OCI-LY7 (cell line): ENCODE measurements at regions of chr2 and their contacts with region 1.

Region 1: GRCh38 chr2:135985018-135985825 is at the start of gene DARS1:
- DNase-seq: peak; percentile 93
- H3K4me3 ChIP-seq: peak within 1 kb of the TSS; percentile 85
- H3K27ac ChIP-seq: peak within 1 kb of the TSS; percentile 79
- H3K4me1 ChIP-seq: peaks cover 49% of the 10 kb centered on the region
- CTCF ChIP-seq: no peak
- total RNA-seq, gene DARS1: 90.5 and 108 TPM in 2 replicates

Region 2: DNA sequence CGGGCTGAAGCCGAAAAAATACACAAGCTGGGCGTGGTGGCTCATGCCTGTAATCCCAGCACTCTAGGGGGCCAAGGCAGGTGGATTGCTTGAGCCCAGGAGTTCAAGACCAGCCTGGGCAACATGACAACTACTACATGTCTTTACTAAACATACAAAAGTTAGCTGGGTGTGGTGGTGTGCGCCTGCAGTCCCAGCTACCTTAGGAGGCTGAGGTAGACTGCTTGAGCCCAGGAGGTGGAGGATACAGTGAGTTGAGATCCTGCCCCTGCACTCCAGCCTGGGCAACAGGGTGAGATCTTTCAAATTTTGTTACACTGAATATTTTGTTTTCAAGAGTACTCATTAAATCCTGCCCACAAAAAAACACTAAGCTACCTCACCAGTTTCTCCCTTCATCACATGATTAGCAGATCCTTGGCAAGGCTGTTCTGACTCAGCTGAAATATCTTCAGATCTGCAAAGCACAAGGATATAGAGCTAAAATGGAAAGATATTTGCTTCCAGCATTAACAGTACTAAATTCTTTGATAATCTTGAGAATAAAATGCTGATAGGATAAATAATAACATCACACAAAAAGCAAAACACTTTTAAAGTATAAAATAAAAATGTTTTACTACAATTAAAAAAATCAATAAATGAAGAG is 80.8 kb before region 1 on chr2:
- CTCF ChIA-PET with region 1: no interaction called
- POLR2A ChIA-PET with region 1: no interaction called
- intact Hi-C with region 1: no loop called
- DNase-seq: no peak
- H3K4me3 ChIP-seq: no peak overlapping the region
- H3K27ac ChIP-seq: no peak overlapping the region
- H3K4me1 ChIP-seq: no peaks in the 10 kb centered on the region
- CTCF ChIP-seq: no peak

Region 3: DNA sequence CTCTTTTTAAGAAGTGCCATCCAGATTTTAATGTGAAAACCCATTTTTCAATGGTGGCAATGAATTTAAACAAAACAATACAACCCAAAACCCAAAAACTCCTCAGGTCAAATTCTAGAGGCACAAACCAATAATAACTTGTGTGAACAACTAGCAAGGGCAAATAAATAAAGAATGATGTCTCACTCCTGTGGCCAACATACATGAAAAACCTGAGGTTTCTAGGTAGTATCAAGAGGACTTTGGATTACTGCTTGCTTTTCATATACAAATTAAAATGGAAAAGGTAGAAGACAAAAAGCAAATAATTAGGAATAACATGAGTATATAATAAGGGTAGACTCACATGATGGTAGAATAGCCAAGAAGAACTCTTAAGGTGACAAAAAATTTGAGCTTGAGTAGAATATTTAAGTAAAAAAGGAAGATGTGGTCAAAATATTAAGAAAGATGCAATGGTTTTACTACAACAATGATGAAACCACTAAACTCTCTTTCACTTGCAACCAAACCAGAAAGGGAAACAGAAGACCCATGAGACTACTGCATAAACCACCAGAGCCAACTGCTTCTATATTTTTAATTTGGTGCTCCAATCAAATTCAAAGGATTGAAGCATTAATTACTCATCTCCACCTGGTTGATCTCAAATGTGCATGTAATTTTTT is 53.3 kb before region 1 on chr2:
- CTCF ChIA-PET with region 1: no interaction called
- POLR2A ChIA-PET with region 1: interaction called, 11 read pairs
- intact Hi-C with region 1: no loop called
- DNase-seq: no peak
- H3K4me3 ChIP-seq: no peak overlapping the region
- H3K27ac ChIP-seq: no peak overlapping the region
- H3K4me1 ChIP-seq: peaks cover 8% of the 10 kb centered on the region
- CTCF ChIP-seq: no peak

Region 4: GRCh38 chr2:136259551-136259950 is 274.3 kb after region 1 on chr2:
- CTCF ChIA-PET with region 1: no interaction called
- POLR2A ChIA-PET with region 1: no interaction called
- intact Hi-C with region 1: no loop called
- DNase-seq: no peak
- H3K4me3 ChIP-seq: no peak overlapping the region
- H3K27ac ChIP-seq: no peak overlapping the region
- H3K4me1 ChIP-seq: peaks cover 36% of the 10 kb centered on the region
- CTCF ChIP-seq: no peak

Region 5: DNA sequence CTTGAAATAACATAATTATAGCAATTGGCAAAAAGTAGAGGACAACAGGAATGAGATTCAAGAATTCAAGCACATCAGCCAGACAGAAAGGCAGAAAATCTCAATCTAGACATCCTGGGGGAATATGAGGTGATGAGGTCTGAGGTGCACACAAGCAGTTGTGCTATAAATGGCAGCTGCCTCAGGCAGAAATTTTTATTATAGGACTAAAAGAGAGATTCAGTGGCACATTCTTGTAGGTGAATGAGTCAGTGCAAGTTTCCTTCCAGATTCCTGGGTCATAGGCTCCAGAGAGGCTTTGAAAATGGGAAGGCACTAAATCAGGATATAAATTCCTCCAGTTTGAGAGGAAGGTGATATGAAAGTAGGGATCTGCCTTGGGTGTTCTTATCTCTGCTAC is 653.0 kb after region 1 on chr2:
- CTCF ChIA-PET with region 1: no interaction called
- POLR2A ChIA-PET with region 1: no interaction called
- intact Hi-C with region 1: no loop called
- DNase-seq: no peak
- H3K4me3 ChIP-seq: no peak overlapping the region
- H3K27ac ChIP-seq: no peak overlapping the region
- H3K4me1 ChIP-seq: no peaks in the 10 kb centered on the region
- CTCF ChIP-seq: no peak